ENCODE measurements at regions of chr7 and their contacts with region 1.

Region 1: DNA sequence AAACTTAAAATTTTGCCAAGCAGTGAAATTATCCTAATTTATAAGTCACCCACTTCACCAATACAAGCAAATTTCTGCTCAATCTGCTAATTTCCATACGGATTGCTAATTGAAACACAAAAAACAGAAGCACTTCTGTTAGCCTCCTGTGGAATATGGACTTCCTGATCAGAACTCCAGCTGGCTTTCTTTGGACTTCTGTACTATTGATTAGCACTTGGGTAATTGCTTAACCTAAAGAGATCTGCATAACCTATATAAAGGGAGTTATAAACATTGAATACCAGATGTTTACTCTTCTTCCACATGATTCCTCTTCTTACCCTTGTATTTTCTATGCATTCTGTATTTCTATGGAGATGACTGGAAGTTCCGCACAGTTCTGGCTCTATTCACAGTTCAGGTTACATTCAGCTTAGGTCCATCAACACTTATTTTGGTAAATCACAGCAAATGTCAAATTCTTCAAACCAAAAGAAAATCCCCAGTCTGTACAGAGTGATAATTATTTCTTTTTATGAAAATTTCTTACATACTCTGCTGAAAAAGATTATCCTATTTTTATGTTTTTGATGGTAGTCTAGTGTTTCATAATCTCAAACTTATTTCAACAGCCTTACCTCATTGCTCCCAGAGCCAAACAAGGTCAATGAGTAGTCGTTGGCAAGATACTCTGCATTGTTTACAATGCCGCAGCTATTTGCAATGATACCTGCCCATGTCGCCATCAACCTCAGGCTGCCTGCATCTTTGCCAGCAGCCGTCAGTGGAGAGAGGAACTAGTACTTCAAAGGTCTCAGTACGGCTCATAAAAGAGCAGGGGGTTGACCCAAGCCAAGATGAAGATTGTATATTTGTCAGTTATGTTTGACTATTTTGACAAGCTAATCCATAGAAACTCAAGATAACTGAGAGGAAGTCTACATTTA is 225.6 kb downstream of the AHR start:
- DNase-seq: no peak
- ATAC-seq: peak; percentile 12
- H3K4me3 ChIP-seq: no peak overlapping the region
- H3K27ac ChIP-seq: no peak overlapping the region
- H3K4me1 ChIP-seq: peaks cover 0 to 3% of the 10 kb centered on the region in 2 donors
- H3K27me3 ChIP-seq: no peaks in the 10 kb centered on the region

Region 2: GRCh38 chr7:17298207-17298839 is 225.8 kb before region 1 on chr7 and contains the start of gene AHR:
- intact Hi-C with region 1: loop called in 1 of 2 experiments (anchors 5 kb)
- DNase-seq: peak; percentile 95 to 98
- ATAC-seq: peak; percentile 94
- H3K4me3 ChIP-seq: peak within 1 kb of the TSS; percentile 11 to 88
- H3K27ac ChIP-seq: peak within 1 kb of the TSS; percentile 17 to 45
- H3K4me1 ChIP-seq: peaks cover 0 to 2% of the 10 kb centered on the region in 2 donors
- H3K27me3 ChIP-seq: peaks cover 0 to 2% of the 10 kb centered on the region in 2 donors
- total RNA-seq, gene AHR: 65.8 to 117 TPM

Region 3: GRCh38 chr7:17370092-17370491 is 154.0 kb before region 1 on chr7:
- intact Hi-C with region 1: loop called in 1 of 2 experiments (anchors 10 kb)
- DNase-seq: no peak
- ATAC-seq: peak; percentile 45
- H3K4me3 ChIP-seq: no peak overlapping the region
- H3K27ac ChIP-seq: no peak overlapping the region
- H3K4me1 ChIP-seq: peaks cover 6 to 14% of the 10 kb centered on the region in 2 donors
- H3K27me3 ChIP-seq: no peaks in the 10 kb centered on the region

Region 4: DNA sequence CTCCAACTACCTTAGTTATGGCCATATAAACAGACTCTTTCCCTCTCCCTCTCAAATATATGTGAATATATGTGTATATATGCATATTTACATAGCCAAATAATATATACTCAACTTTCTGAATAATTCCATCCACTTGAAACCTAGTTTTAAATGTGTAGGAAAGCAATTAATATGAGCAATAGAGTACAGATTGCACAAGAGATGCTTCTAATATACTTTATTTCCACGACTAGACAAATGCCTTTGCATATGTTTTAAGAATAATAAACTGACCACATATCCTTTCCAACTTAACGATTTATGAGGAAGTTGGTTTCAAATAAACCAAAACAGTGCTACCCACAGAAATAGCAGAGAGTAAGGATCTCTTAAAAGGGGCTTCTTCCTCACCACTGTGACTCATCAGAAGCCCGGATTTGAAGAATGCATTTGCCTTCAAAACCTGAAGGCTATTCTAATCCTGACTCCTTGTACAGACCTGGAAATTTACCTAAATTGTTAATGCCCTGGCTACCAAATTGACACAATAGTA is 40.7 kb after region 1 on chr7:
- intact Hi-C with region 1: no loop called
- DNase-seq: no peak
- ATAC-seq: no peak
- H3K4me3 ChIP-seq: no peak overlapping the region
- H3K27ac ChIP-seq: no peak overlapping the region
- H3K4me1 ChIP-seq: no peaks in the 10 kb centered on the region
- H3K27me3 ChIP-seq: no peaks in the 10 kb centered on the region

Region 5: GRCh38 chr7:18558503-18558902 is 1034.4 kb after region 1 on chr7:
- intact Hi-C with region 1: no loop called
- DNase-seq: no peak
- ATAC-seq: no peak
- H3K4me3 ChIP-seq: no peak overlapping the region
- H3K27ac ChIP-seq: peak overlapping the region; percentile 43 to 67
- H3K4me1 ChIP-seq: peaks cover 4 to 13% of the 10 kb centered on the region in 2 donors
- H3K27me3 ChIP-seq: no peaks in the 10 kb centered on the region

Measured in aorta (tissue), 5 donors.